ENCODE measurements at regions of chr4 and their contacts with region 1.

Region 1: DNA sequence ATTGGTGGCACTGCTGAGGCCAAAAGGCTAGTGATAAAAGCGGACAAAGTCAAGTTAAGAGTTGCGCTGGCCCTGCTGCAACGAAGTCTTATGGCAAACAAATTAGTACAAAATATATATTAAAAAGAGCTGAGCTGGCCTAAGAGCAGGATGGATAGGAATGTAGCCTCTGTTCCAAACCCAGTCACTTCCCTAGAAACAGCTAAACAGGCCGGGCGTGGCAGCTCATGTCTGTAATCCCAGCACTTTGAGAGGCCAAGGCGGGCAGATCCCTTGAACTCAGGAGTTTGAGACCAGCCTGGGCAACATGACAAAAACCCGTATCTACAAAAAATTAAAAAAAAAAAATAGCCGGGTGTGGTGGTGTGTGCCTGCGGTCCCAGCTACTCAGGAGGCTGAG is 32.4 kb upstream of the UGDH start:
- DNase-seq: no peak
- CTCF ChIP-seq: no peak

Region 2: DNA sequence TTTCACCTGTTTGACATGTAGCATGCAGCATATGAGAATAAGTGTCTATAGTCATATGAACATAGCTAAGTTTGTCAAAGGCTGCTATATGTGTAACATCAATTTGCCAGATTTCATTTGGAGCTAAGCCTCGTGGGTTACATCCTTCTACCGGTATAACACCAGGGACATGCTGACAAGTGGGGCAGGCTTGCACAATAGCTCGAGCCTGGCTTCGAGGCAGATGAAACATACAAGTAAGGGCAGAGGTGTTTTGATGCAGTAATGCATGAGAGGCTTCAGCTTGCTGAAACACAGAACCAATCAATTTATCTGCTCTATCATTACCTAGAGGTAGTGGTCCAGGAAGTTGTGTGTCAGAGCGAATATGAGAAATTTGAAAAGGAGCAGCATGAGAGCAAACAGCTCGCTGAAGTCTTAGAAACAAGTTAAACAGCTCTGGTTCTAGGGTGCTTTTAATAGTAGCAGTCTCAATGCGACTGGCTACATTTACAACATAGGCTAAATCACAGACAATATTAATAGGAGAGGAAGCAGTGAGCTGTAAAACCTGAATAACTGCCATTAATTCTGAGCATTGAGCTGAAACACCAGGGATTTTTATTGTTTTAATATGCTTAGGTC is 17.5 kb before region 1 on chr4:
- CTCF ChIA-PET with region 1: interaction called, 12 read pairs
- POLR2A ChIA-PET with region 1: no interaction called
- DNase-seq: no peak
- CTCF ChIP-seq: no peak

Measured in GM10248 (cell line).